Prostate gland (tissue), 2 donors: ENCODE measurements at regions of chr15 and their contacts with region 1.

Region 1: DNA sequence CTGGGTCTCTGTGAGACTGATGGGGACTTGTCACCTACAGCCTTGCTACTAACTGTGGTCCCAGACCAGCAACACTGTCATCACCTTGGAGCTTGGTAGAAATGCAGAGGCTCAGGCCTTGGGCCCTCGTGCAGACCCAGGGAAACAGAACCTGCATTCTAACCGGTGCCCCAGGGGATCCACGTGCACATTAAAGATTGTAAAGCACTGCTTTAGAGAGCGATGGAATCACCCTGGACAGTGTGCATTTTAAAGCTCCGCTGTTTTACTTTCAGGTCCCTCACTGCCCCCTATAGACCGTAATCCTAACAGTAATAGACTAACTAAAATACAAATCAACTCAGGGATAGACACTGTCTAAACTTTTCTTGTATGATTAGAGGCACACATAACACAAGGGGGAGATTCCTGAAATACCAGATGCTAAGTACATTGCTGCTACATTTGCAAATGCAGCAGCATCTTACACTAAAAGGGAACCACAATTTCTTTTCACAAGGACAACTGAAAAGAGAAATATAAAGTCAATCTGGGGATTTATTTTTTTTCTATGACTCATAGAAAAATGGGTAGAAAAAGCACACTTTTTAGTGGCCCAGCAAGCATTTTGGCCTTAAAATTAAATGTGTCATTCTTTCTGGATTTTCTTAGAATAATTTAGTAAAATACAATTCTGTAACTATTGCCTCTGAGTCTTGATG is 10.5 kb upstream of the SH3GL3 start:
- DNase-seq: peak; percentile 7
- H3K4me3 ChIP-seq: no peak overlapping the region
- H3K27ac ChIP-seq: no peak overlapping the region
- H3K4me1 ChIP-seq: no peaks in the 10 kb centered on the region
- H3K27me3 ChIP-seq: no peaks in the 10 kb centered on the region
- CTCF ChIP-seq: peak in 2 of 4 experiments; percentile 10 to 48
- POLR2A ChIP-seq: no peak

Region 2: DNA sequence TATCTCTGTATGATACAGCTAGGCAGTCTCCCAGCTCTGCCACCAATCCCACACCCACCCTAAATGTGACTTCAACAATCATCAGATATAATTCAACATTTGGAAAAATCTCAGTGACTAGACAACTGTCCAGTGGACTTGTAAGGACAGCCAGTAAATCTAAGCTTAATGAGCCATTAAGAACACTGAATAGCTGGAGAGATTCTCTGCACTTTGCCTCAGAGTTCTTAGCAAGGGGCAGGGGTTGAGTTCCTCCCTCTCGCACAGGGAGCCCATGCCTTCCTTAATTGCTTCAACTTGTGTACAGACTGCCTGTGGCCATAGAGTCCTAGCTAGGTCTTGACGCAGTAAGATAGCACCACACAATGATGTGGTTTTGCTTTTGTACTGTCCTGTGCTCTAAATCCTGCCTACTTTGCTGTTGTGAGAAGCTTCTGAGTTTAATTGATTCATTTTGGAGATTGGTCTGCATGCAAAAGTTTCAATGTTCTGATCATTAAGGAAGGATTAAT is 1406.4 kb before region 1 on chr15:
- intact Hi-C with region 1: no loop called
- DNase-seq: no peak
- H3K4me3 ChIP-seq: no peak overlapping the region
- H3K27ac ChIP-seq: no peak overlapping the region
- H3K4me1 ChIP-seq: no peaks in the 10 kb centered on the region
- H3K27me3 ChIP-seq: no peaks in the 10 kb centered on the region
- CTCF ChIP-seq: no peak
- POLR2A ChIP-seq: no peak

Region 3: DNA sequence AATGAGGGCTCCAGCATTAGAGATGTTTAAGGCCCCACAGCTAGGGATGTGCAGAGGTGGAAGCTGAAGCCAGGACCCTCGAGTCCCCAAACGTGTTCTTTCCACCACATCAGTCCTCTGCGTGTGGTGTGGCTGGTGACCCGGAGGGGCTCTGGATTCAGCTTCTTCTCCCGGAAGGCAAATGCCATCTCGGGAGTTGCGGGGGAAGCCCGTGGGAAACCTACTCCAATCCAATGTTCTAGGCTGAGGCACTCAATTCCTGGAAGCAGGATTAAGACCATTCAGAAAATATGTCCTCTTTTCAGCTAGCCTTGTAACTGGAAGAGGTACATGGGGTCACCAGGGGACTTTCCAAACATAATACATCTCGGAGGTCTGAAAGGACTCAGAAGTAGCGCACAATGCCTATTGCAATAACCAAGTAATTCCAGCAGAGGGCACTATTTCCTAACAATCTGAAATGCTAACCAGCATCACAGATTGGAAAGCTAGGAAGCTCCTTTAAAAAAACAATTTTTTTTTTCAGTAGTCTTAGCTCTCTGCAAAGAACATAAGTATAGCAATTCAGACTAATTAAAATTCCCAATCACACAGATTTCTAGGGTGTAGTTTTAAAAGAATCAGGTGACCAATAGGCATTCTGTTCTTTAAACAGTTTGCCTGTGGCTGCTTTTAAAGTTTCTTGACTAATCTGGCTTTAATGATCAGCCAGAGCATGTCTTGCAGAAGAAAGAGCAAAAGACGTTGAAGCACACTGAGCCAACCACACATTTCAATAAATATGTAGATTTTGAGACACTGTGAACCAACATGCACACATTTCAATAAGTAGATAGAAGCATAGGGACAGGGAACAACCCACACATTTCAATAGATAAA is 188.2 kb before region 1 on chr15:
- intact Hi-C with region 1: loop called (anchors 10 kb)
- DNase-seq: peak; percentile 53
- H3K4me3 ChIP-seq: no peak overlapping the region
- H3K27ac ChIP-seq: no peak overlapping the region
- H3K4me1 ChIP-seq: no peaks in the 10 kb centered on the region
- H3K27me3 ChIP-seq: no peaks in the 10 kb centered on the region
- CTCF ChIP-seq: peak; percentile 87 to 94 (median 93)
- POLR2A ChIP-seq: no peak

Region 4: GRCh38 chr15:83365370-83365938 is 71.2 kb before region 1 on chr15:
- intact Hi-C with region 1: no loop called
- DNase-seq: no peak
- H3K4me3 ChIP-seq: peak overlapping the region in 1 of 2 donors; percentile 7
- H3K27ac ChIP-seq: no peak overlapping the region
- H3K4me1 ChIP-seq: no peaks in the 10 kb centered on the region
- H3K27me3 ChIP-seq: no peaks in the 10 kb centered on the region
- CTCF ChIP-seq: no peak
- POLR2A ChIP-seq: no peak

Region 5: DNA sequence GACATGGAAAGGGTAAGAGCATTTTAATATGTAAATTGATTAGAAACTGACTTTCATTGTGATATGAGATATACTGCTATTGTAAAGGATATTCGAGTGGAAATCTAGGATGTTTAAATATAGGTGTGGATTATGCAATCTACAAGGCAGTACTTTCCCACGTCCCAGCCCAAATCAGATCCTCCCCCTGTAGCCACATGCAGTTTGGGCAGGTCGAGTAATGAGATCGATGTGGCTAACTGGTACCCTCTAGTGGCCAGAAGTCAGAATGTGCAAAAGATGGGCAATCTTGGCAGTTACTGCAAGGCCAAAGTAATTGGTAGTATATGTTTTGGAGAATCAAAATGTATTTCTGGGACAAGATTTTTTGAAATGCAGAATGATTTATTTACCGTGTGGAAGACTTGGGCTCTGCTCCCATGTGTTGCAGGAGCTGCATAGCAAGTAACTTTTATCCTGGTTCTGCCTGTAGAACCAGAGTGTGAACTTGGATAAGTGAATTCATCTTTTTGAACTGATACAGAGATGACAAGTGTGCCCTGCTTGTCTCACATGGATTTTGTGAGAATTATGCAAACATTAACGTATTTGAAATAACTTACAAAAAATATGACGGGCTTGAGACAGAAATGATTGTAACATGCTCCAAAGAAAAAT is 122.8 kb after region 1 on chr15:
- intact Hi-C with region 1: loop called (anchors 1 kb)
- DNase-seq: peak; percentile 55
- H3K4me3 ChIP-seq: no peak overlapping the region
- H3K27ac ChIP-seq: no peak overlapping the region
- H3K4me1 ChIP-seq: no peaks in the 10 kb centered on the region
- H3K27me3 ChIP-seq: no peaks in the 10 kb centered on the region
- CTCF ChIP-seq: peak; percentile 48 to 73 (median 64)
- POLR2A ChIP-seq: no peak